ENCODE measurements at regions of chr6 and their contacts with region 1.

Region 1: GRCh38 chr6:123715006-123715875 is 78.5 kb upstream of the TRDN start:
- DNase-seq: no peak
- H3K4me3 ChIP-seq: no peak overlapping the region
- H3K27ac ChIP-seq: no peak overlapping the region
- H3K4me1 ChIP-seq: no peaks in the 10 kb centered on the region
- H3K27me3 ChIP-seq: peaks cover 0 to 3% (median 0%) of the 10 kb centered on the region in 4 donors
- CTCF ChIP-seq: peak in 5 of 6 experiments; percentile 33 to 58 (median 42)
- POLR2A ChIP-seq: no peak

Region 2: GRCh38 chr6:123415844-123416468 is 299.3 kb before region 1 on chr6:
- intact Hi-C with region 1: loop called (anchors 10 kb)
- DNase-seq: no peak
- H3K4me3 ChIP-seq: no peak overlapping the region
- H3K27ac ChIP-seq: no peak overlapping the region
- H3K4me1 ChIP-seq: no peaks in the 10 kb centered on the region
- H3K27me3 ChIP-seq: no peaks in the 10 kb centered on the region
- CTCF ChIP-seq: peak; percentile 34 to 67 (median 53)
- POLR2A ChIP-seq: no peak